Left lung (tissue), 14 donors: ENCODE measurements at regions of chr19 and their contacts with region 1.

Region 1: GRCh38 chr19:39671738-39672363 is 16.1 kb downstream of the LGALS16 start:
- DNase-seq: peak in 2 of 4 donors; percentile 18 to 39
- ATAC-seq: peak; percentile 74
- H3K4me3 ChIP-seq: no peak overlapping the region
- H3K27ac ChIP-seq: no peak overlapping the region
- H3K4me1 ChIP-seq: no peaks in the 10 kb centered on the region
- H3K27me3 ChIP-seq: no peaks in the 10 kb centered on the region
- CTCF ChIP-seq: peak; percentile 32 to 40

Region 2: DNA sequence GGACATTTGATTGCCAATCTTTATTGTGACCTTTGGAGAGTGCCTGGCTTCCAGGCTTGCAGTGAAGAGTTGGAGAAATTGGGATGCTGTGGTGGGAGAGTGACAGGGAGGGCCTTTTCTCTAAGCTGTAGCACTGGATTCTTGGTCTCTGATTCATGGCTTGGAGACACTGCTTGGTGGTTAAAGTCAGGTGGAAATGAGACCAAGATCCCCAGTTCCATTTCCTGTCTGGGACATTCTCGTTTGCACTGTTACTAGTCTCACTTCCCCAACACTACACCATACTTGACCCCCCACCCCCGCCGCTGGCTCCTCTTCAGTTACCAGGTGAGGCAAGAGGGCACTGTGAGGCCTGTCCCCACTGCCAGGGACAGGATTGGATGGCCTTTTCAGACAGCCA is 223.6 kb before region 1 on chr19:
- intact Hi-C with region 1: no loop called
- DNase-seq: no peak
- ATAC-seq: no peak
- H3K4me3 ChIP-seq: no peak overlapping the region
- H3K27ac ChIP-seq: no peak overlapping the region
- H3K4me1 ChIP-seq: peaks cover 20 to 50% of the 10 kb centered on the region in 2 donors
- H3K27me3 ChIP-seq: no peaks in the 10 kb centered on the region
- CTCF ChIP-seq: no peak

Region 3: DNA sequence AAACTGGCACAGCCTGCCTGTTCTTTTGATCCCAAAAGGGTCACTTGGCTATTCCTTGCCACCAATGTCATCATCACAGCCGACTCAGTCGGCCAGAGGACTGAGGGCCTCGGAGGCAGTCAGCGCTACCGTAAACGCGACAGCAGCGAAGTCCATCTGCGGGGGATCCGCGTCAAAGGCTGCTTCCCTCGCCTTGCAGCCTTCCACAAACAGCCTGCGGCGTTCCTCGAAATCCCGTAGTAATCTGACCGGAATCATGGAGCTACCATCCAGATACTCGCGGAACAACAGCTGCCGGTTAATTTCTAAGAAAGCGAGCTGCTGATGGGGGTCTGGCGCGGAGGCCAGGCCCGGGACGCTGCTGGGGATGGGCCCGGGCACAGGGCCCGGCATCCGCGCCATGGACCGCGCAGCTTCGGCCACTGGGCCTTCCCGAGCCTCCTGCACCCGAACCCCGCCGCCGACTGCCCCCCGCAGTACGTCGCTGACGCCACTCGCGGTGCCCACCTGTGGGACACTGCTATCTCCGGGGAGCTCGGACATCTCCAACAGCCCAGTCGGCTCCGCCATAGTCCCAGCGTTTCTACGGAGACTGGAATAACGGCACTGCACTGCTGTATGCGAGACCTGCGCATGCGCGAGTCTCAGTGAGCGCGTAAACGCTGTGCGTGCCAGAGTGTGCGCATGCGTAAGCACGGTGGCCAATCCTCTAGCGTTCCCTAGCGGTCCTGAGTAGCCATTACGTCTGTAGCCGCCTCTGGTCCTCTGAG is 139.4 kb before region 1 on chr19 and contains the start of gene EID2B:
- intact Hi-C with region 1: no loop called
- DNase-seq: peak; percentile 96 to 99 (median 98)
- ATAC-seq: peak; percentile 99
- H3K4me3 ChIP-seq: peak within 1 kb of the TSS; percentile 84 to 87
- H3K27ac ChIP-seq: peak within 1 kb of the TSS; percentile 78 to 86
- H3K4me1 ChIP-seq: peaks cover 3 to 12% of the 10 kb centered on the region in 2 donors
- H3K27me3 ChIP-seq: no peaks in the 10 kb centered on the region
- CTCF ChIP-seq: peak; percentile 96 to 97
- polyA plus RNA-seq, gene EID2B: 3.8 to 5.6 (median 4.8) TPM

Region 4: DNA sequence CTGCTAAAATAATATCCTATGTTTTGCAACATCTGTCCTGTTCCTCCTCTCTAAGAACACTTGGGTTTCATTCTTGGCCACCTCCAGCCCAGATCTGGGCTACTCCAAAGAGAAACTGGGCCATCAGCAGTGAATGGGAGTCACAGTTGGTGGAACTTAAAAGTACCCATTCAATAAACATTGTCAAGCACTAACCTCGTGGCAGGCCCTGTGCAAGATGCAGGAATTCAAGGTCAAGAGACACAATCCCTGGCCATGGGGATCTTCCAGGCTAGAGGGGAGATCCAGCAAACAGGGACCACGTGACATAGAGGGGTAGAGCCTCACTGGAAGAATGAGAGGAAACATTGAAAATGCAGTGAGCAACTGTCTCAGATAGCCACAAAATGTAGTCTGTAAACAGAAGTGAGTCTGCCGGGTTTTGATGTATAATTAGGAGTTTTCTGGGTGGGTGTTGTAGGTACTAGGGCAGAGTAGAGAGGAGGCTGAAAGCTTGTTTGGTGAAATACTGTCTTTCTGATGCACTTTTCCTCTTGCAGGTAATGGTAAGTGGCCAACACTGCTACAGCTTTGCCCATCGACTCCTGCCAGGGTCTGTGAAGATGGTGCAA is 117.0 kb before region 1 on chr19:
- intact Hi-C with region 1: loop called in 1 of 2 experiments (anchors 5 kb)
- DNase-seq: no peak
- ATAC-seq: no peak
- H3K4me3 ChIP-seq: no peak overlapping the region
- H3K27ac ChIP-seq: no peak overlapping the region
- H3K4me1 ChIP-seq: peaks cover 0 to 15% of the 10 kb centered on the region in 2 donors
- H3K27me3 ChIP-seq: no peaks in the 10 kb centered on the region
- CTCF ChIP-seq: no peak